ENCODE measurements at regions of chr11 and their contacts with region 1.

Region 1: GRCh38 chr11:74948898-74949747 is at the starts of genes SPCS2 and XRRA1:
- DNase-seq: peak; percentile 100
- ATAC-seq: peak; percentile 99
- H3K4me3 Mint-ChIP-seq: peak within 1 kb of the TSS; percentile 96
- H3K27ac Mint-ChIP-seq: peak within 1 kb of the TSS; percentile 97
- H3K4me1 Mint-ChIP-seq: peaks cover 42% of the 10 kb centered on the region
- H3K27me3 Mint-ChIP-seq: no peaks in the 10 kb centered on the region
- total RNA-seq, gene SPCS2: 124 to 131 TPM
- total RNA-seq, gene XRRA1: 7.8 to 11.9 TPM

Region 2: GRCh38 chr11:73520353-73521061 is 1428.6 kb before region 1 on chr11:
- CTCF ChIA-PET with region 1: no interaction called
- POLR2A ChIA-PET with region 1: interaction called, 10 read pairs
- intact Hi-C with region 1: no loop called
- DNase-seq: no peak
- ATAC-seq: peak; percentile 24
- H3K4me3 Mint-ChIP-seq: no peak overlapping the region
- H3K27ac Mint-ChIP-seq: peak overlapping the region; percentile 65
- H3K4me1 Mint-ChIP-seq: peaks cover 24% of the 10 kb centered on the region
- H3K27me3 Mint-ChIP-seq: no peaks in the 10 kb centered on the region

Region 3: DNA sequence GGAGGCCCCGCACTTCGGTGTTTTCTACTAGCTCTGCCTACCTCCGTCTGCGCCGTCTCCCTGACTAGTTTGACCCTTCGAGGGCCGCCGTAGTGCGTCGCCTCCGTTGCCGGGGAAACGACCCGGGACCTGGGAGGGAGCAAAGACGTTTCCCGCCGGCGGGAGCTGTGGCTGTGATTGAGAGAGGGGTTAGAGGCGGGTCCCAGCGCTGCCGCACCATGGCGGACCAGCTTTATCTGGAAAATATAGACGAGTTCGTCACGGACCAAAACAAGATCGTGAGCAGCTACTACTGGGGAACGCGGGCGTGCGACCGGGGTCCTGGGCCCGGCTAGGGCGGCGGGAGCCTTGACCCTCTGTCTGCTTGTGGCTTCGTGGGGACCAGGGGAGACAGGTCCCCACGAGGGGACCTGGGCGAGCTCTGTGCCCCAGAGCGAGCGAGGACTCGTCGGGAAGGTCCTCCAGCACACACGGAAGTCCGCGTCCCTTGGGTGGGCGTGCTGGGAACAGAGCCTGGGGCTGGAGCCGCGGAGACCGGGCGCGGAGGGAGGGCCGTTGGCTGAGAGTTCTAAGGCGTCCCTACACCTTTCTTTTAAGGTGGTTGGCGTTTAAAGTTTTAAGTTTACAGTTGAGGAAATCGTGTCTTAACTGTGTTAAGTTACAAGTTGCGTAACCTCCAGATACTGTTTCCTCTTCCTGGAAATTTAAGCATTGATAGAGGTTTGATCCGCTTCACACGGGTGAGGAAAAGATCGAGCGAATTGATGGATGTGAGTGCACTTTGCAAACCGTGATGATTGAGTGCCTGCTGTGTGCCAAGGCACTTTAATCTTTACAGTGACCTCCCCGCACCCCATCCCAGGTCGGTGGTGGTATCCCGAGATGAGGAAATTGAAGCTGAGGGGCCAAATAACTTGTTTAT is 356.4 kb before region 1 on chr11 and contains the start of gene POLD3:
- CTCF ChIA-PET with region 1: no interaction called
- POLR2A ChIA-PET with region 1: no interaction called
- intact Hi-C with region 1: loop called in 1 of 2 experiments (anchors 1 kb)
- DNase-seq: peak; percentile 98
- ATAC-seq: peak; percentile 96
- H3K4me3 Mint-ChIP-seq: peak within 1 kb of the TSS; percentile 93
- H3K27ac Mint-ChIP-seq: peak within 1 kb of the TSS; percentile 96
- H3K4me1 Mint-ChIP-seq: peaks cover 27% of the 10 kb centered on the region
- H3K27me3 Mint-ChIP-seq: no peaks in the 10 kb centered on the region
- total RNA-seq, gene POLD3: 70.0 to 79.8 TPM

Region 4: GRCh38 chr11:74988541-74989260 is 39.6 kb after region 1 on chr11 and contains the start of gene NEU3:
- CTCF ChIA-PET with region 1: interaction called, 4 read pairs
- POLR2A ChIA-PET with region 1: interaction called, 3 read pairs
- intact Hi-C with region 1: loop called (anchors 1 kb)
- DNase-seq: peak; percentile 91
- ATAC-seq: peak; percentile 97
- H3K4me3 Mint-ChIP-seq: peak within 1 kb of the TSS; percentile 85
- H3K27ac Mint-ChIP-seq: peak within 1 kb of the TSS; percentile 77
- H3K4me1 Mint-ChIP-seq: peaks cover 31% of the 10 kb centered on the region
- H3K27me3 Mint-ChIP-seq: no peaks in the 10 kb centered on the region
- total RNA-seq, gene NEU3: 12.0 to 13.9 TPM

Region 5: DNA sequence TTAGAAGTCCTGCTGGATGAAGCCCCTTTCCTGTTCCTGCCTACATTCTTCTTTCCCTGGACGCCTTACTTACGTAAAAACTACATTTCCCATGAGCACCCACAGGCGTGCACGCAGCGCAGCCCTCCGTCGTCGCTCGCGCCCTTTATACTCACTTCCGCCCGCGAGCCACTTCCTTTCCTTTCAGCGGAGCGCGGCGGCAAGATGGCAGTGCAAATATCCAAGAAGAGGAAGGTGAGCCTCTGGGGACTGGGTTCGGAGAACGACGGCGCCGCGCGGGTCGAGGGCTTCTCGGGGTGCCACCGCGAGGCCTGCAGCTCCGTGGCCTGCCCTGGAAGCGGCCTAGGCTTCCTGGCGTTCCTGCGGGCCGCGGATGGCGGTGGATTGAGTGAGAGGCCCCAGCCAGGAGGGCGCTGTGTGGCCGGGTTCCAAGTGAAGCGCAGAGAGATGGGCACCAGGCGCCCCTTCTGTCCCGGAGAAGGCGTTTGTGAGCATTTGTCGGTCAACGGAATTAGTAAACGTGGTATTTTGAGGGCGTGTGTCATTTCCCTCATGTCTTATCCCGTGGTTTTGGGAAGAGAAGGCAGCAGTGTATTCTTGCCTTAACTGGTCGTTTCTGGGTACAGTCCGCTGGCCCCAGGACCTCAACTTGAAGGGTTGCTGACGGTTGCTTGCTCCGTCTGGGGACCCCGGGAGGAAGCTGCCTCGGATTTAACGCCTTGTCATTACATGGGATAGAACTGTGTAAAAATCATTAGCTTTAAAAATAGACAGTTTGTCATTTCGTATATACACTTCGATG is 450.4 kb after region 1 on chr11 and contains the start of gene RPS3:
- CTCF ChIA-PET with region 1: no interaction called
- POLR2A ChIA-PET with region 1: no interaction called
- intact Hi-C with region 1: loop called in 1 of 2 experiments (anchors 1 kb)
- DNase-seq: peak; percentile 94
- ATAC-seq: peak; percentile 92
- H3K4me3 Mint-ChIP-seq: peak within 1 kb of the TSS; percentile 96
- H3K27ac Mint-ChIP-seq: peak within 1 kb of the TSS; percentile 98
- H3K4me1 Mint-ChIP-seq: peaks cover 41% of the 10 kb centered on the region
- H3K27me3 Mint-ChIP-seq: no peaks in the 10 kb centered on the region
- total RNA-seq, gene RPS3: 4,536 to 4,569 TPM

Measured in activated CD4-positive, alpha-beta T cell treated with anti-CD3 and anti-CD28 coated beads for 36 hours (primary cell).